ENCODE measurements at regions of chr4 and their contacts with region 1.

Region 1: DNA sequence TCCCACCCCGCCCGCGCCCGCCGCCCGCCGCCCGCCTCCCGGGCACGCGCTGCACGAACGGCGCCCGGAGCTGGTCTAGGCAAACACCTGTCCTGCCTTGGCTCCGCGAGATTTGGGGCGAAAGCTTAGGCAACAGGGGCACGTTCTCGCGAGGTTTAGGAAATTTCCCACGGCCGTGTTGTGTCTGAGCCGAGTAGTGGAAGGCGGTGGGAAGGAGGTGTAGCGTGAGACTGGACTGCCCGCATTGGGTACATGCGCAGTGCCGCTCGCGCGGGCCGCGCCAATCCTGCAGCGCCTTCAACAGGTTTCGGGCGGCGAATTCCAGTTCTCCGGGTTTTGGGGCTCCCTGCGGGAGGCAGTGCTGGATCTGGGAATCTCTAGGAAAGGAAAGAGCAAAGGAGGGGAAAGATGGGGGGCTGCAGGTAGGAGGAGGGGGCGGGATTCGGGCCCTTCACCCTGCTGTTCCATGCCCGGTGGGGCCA is 1.3 kb upstream of the RBPJ start:
- DNase-seq: peak; percentile 98
- ATAC-seq: peak; percentile 88
- H3K4me3 ChIP-seq: peak overlapping the region; percentile 77 to 88 (median 78)
- H3K27ac ChIP-seq: peak overlapping the region; percentile 98
- H3K4me1 ChIP-seq: peaks cover 33% of the 10 kb centered on the region
- H3K27me3 ChIP-seq: no peaks in the 10 kb centered on the region; a peak in 1 of 5 replicates
- CTCF ChIP-seq: peak; percentile 35; the same call in 1 of the 2 replicates
- EP300 ChIP-seq: peak in 1 of 2 experiments; percentile 40; a peak in 2 of 4 replicates
- POLR2A ChIP-seq: peak in 1 of 2 experiments; percentile 44; a peak in 1 of 4 replicates
- RAD21 ChIP-seq: no peak

Region 2: DNA sequence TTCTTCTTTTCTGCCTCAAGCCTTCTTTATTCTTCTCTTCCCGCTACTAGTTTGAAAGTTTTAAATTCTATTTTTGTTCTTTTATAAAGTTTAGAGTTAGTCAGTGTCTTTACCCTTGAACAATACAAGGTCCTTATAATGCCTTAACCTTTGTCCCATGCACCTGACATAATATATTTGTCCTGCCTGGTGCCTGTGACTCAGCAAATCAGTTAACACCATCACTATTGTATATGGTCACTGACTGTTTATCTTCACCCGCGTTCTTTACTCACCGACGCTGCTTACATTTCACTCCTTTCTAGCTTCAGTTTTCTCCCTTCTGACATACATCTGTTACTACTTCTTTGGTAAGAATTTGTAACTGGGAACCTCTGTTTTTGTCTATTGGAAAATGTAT is 399.8 kb before region 1 on chr4:
- CTCF ChIA-PET with region 1: no interaction called
- POLR2A ChIA-PET with region 1: no interaction called
- in situ Hi-C with region 1: no loop called
- intact Hi-C with region 1: loop called (anchors 2 kb)
- DNase-seq: peak; percentile 91
- ATAC-seq: peak; percentile 92
- H3K4me3 ChIP-seq: no peak overlapping the region
- H3K27ac ChIP-seq: peak overlapping the region; percentile 85
- H3K4me1 ChIP-seq: peaks cover 63% of the 10 kb centered on the region
- H3K27me3 ChIP-seq: no peaks in the 10 kb centered on the region
- CTCF ChIP-seq: no peak
- EP300 ChIP-seq: peak; percentile 22 to 86; a peak in 3 of 4 replicates
- POLR2A ChIP-seq: no peak
- RAD21 ChIP-seq: no peak

Region 3: GRCh38 chr4:26081795-26082498 is 237.6 kb before region 1 on chr4:
- CTCF ChIA-PET with region 1: interaction called, 4 read pairs
- POLR2A ChIA-PET with region 1: no interaction called
- in situ Hi-C with region 1: no loop called
- intact Hi-C with region 1: loop called (anchors 5 kb)
- DNase-seq: peak; percentile 32
- ATAC-seq: peak; percentile 85
- H3K4me3 ChIP-seq: no peak overlapping the region
- H3K27ac ChIP-seq: no peak overlapping the region
- H3K4me1 ChIP-seq: no peaks in the 10 kb centered on the region
- H3K27me3 ChIP-seq: peaks cover 2 to 6% of the 10 kb centered on the region in 2 experiments; a peak in 1 of 5 replicates
- CTCF ChIP-seq: peak; percentile 68
- EP300 ChIP-seq: no peak
- POLR2A ChIP-seq: no peak
- RAD21 ChIP-seq: 0 out of 2 replicates have a peak, but pooled peaks have one; percentile 24

Region 4: GRCh38 chr4:26356081-26356501 is 36.6 kb after region 1 on chr4:
- CTCF ChIA-PET with region 1: no interaction called
- POLR2A ChIA-PET with region 1: no interaction called
- in situ Hi-C with region 1: no loop called
- intact Hi-C with region 1: no loop called
- DNase-seq: no peak
- ATAC-seq: peak; percentile 41
- H3K4me3 ChIP-seq: no peak overlapping the region
- H3K27ac ChIP-seq: no peak overlapping the region
- H3K4me1 ChIP-seq: peaks cover 30% of the 10 kb centered on the region
- H3K27me3 ChIP-seq: no peaks in the 10 kb centered on the region
- CTCF ChIP-seq: no peak
- EP300 ChIP-seq: no peak
- POLR2A ChIP-seq: no peak
- RAD21 ChIP-seq: no peak

Region 5: DNA sequence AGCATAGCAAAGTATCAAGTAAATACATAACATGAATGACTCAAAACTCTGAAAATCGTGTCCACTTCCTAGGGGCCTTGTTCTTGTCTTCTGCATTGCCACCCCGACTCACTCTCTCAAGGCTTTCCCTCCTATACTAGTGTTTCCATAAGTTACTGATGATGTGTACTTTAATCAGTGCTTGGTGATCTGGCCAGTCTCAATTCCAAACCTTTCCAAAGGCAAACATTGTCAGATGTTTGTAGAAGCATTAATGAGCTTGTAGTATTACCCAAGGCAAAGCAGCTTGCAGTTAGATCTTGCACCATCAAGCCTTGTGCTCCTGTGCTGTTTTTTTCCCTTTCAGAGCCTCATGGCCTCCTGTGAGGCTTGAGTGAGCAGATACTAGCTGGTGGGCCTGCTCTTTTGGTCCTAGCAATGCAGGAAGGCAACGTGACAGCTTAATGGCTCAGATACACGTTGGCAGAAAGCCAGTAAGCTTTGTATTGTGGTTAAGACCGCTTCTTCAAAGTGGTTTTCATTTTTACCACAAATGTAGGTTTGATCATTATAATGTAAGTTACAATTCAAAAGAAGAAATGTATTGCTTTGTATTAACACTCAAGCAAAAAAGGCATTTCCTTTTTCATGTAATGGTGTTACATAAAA is 53.1 kb after region 1 on chr4:
- CTCF ChIA-PET with region 1: no interaction called
- POLR2A ChIA-PET with region 1: interaction called, 5 read pairs
- in situ Hi-C with region 1: no loop called
- intact Hi-C with region 1: loop called (anchors 5 kb)
- DNase-seq: peak; percentile 90
- ATAC-seq: peak; percentile 98
- H3K4me3 ChIP-seq: no peak overlapping the region; a peak in 1 of 6 replicates
- H3K27ac ChIP-seq: peak overlapping the region; percentile 12
- H3K4me1 ChIP-seq: peaks cover 47% of the 10 kb centered on the region
- H3K27me3 ChIP-seq: no peaks in the 10 kb centered on the region
- CTCF ChIP-seq: no peak
- EP300 ChIP-seq: peak in 1 of 2 experiments; percentile 62; a peak in 1 of 4 replicates
- POLR2A ChIP-seq: no peak
- RAD21 ChIP-seq: no peak; the same call in 1 of the 2 replicates

Measured in HepG2 (cell line).